Astrocyte of the cerebellum (primary cell): ENCODE measurements at regions of chr2 and their contacts with region 1.

Region 1: GRCh38 chr2:20021405-20022009 is 9.0 kb upstream of the MATN3 start:
- DNase-seq: no peak
- H3K4me3 ChIP-seq: no peak overlapping the region
- CTCF ChIP-seq: no peak

Region 2: GRCh38 chr2:19949071-19949470 is 72.4 kb before region 1 on chr2:
- in situ Hi-C with region 1: loop called (anchors 5 kb)
- DNase-seq: peak; percentile 48
- H3K4me3 ChIP-seq: no peak overlapping the region
- CTCF ChIP-seq: no peak

Region 3: GRCh38 chr2:20093263-20094141 is 72.0 kb after region 1 on chr2:
- in situ Hi-C with region 1: loop called (anchors 5 kb)
- DNase-seq: peak; percentile 73
- H3K4me3 ChIP-seq: no peak overlapping the region
- CTCF ChIP-seq: peak; percentile 74